ENCODE measurements at regions of chr9 and their contacts with region 1.

Region 1: GRCh38 chr9:36995927-36996705 is 38.0 kb downstream of the PAX5 start:
- DNase-seq: peak; percentile 77
- H3K4me3 Mint-ChIP-seq: no peak overlapping the region
- H3K27ac Mint-ChIP-seq: no peak overlapping the region
- H3K4me1 Mint-ChIP-seq: peaks cover 3% of the 10 kb centered on the region
- H3K27me3 Mint-ChIP-seq: peaks cover 30% of the 10 kb centered on the region

Region 2: DNA sequence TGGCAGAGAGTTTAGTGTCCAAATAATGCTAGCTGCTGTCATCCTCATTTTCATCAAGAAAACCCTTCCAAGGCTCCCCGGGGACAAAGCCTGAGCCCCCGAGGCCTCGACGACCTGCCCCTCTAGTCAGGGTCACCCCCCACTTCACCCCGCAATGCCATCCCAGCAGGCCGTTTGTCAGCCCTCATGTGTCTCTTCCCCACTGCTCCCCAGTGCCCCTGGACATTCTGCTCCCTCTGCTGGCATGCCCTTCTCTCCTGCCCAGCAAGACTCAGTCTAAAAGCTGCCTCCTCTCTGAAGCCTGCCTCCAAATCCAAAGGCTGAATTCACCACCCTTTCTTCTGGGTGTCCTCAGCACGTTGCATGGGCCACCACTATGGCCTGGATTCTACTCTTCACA is 21.4 kb before region 1 on chr9:
- CTCF ChIA-PET with region 1: no interaction called
- intact Hi-C with region 1: no loop called
- DNase-seq: peak; percentile 33
- H3K4me3 Mint-ChIP-seq: no peak overlapping the region
- H3K27ac Mint-ChIP-seq: no peak overlapping the region
- H3K4me1 Mint-ChIP-seq: peaks cover 3% of the 10 kb centered on the region
- H3K27me3 Mint-ChIP-seq: peaks cover 8% of the 10 kb centered on the region

Region 3: DNA sequence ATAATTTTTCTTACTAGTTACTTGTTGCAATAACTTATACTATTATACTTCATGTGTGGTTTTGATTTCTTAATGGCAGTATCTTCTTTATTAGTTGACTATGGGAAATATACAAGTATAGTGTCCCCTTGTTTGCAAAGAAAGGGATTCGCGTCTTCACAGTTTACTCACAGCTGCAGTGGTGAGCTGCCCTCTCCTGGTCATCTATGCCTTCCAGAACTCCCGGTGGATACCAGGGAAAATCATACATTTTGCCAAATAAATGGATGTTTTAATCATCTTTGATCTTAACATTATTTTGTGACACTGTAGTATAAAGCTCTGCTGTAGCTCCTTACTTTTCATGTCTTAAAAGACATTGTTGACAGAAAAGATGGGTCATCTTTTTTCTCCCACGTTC is 266.3 kb after region 1 on chr9:
- CTCF ChIA-PET with region 1: interaction called, 3 read pairs
- intact Hi-C with region 1: loop called (anchors 5 kb)
- DNase-seq: no peak
- H3K4me3 Mint-ChIP-seq: no peak overlapping the region
- H3K27ac Mint-ChIP-seq: no peak overlapping the region
- H3K4me1 Mint-ChIP-seq: peaks cover 9% of the 10 kb centered on the region
- H3K27me3 Mint-ChIP-seq: no peaks in the 10 kb centered on the region

Region 4: DNA sequence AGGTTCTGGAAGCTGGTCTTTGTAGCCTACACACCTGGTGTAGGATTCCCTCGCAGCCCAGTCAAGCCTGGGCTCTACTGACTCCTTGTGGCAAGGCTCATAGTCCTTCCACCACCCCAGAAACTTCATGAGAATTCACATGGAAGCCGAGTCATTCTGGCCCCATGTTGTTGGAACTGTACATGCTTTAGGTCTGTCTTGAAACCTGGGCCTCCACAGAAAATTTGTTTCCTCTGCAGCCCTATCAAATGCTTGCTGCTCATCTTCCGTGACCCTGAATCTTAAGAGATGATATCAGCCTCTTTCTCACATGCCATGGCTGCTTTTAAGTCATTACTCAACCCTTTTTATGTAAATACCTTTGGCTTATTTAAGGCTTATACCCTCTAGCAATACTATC is 313.0 kb after region 1 on chr9:
- CTCF ChIA-PET with region 1: interaction called, 6 read pairs
- intact Hi-C with region 1: loop called (anchors 1 kb)
- DNase-seq: peak; percentile 51
- H3K4me3 Mint-ChIP-seq: no peak overlapping the region
- H3K27ac Mint-ChIP-seq: no peak overlapping the region
- H3K4me1 Mint-ChIP-seq: peaks cover 10% of the 10 kb centered on the region
- H3K27me3 Mint-ChIP-seq: no peaks in the 10 kb centered on the region

Region 5: DNA sequence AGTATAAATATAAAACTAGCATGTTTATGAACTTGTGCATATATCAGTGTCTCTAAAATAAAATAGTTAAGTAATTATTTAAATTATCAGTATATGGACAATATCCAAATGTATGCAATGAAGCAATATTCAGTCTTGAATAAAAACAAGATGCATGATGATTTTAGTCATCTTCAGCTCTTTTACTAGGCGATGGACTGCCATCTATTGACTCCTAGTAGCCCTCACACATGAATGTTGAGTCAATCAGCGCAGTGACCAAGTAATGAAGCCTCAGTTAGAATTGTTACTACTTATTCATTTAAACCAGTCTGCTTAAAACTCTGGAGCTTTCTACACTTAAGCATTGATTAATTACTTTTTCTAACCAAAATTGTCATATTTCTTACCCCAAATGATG is 333.5 kb after region 1 on chr9:
- CTCF ChIA-PET with region 1: interaction called, 17 read pairs
- intact Hi-C with region 1: loop called (anchors 1 kb)
- DNase-seq: peak; percentile 16
- H3K4me3 Mint-ChIP-seq: no peak overlapping the region
- H3K27ac Mint-ChIP-seq: no peak overlapping the region
- H3K4me1 Mint-ChIP-seq: peaks cover 7% of the 10 kb centered on the region
- H3K27me3 Mint-ChIP-seq: no peaks in the 10 kb centered on the region

Region 6: GRCh38 chr9:37364751-37365360 is 368.7 kb after region 1 on chr9:
- CTCF ChIA-PET with region 1: interaction called, 6 read pairs
- intact Hi-C with region 1: loop called (anchors 1 kb)
- DNase-seq: peak; percentile 55
- H3K4me3 Mint-ChIP-seq: no peak overlapping the region
- H3K27ac Mint-ChIP-seq: no peak overlapping the region
- H3K4me1 Mint-ChIP-seq: no peaks in the 10 kb centered on the region
- H3K27me3 Mint-ChIP-seq: no peaks in the 10 kb centered on the region

Region 7: DNA sequence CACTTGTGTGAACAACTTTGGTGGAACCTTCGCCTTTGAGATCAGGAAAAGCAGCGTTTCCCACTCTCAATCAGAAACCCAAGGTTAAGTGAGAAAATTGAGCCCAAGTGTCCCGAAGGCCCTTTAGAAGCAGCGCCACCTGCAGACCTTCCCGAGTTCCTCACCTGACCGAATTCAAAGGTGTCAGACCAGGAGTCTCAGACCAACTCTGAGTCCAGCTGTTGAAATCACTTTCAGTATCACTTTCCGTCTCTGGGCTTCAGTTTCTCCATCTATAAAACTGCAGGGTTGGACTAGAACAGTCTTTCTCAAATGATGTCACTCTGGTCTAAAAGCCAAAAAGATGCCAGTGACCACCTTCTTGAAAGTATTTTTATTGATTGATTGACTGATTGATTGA is 394.6 kb after region 1 on chr9:
- CTCF ChIA-PET with region 1: interaction called, 7 read pairs
- intact Hi-C with region 1: loop called (anchors 1 kb)
- DNase-seq: peak; percentile 67
- H3K4me3 Mint-ChIP-seq: no peak overlapping the region
- H3K27ac Mint-ChIP-seq: no peak overlapping the region
- H3K4me1 Mint-ChIP-seq: no peaks in the 10 kb centered on the region
- H3K27me3 Mint-ChIP-seq: no peaks in the 10 kb centered on the region

Region 8: DNA sequence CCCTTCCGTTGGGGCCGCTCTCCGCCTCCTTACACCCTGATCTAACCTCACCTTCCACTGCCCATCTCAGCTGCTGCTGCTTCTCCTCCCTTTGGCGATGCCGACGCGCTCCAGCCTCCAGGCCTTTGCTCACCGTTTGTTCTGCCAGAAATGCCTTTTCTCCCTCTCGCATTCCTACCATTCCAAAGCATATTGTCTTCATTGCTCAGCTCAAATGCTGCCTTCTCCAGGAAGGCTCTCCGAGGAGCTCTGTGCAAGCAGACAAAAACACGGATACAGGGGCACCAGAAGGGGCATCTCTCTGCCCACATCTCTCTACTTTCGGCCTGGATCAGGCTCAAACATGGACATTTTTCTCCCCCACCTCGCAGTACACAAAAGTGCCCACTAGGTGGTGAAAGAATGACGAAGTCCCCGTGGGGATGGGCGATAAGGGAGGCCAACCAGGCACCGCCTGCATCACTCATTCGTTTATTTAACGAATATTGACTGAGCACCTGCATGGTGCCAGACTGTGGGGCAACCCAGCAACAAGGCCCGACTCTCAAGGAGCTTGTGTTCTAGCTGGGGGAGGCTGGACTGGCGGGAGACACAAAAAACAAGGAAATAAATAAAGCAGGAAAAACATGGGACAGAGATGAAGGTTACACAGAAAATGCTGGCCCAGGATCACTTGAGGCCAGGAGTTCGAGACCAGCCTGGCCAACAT is 419.0 kb after region 1 on chr9:
- CTCF ChIA-PET with region 1: interaction called, 9 read pairs
- intact Hi-C with region 1: loop called (anchors 5 kb)
- DNase-seq: peak; percentile 90
- H3K4me3 Mint-ChIP-seq: peak overlapping the region; percentile 34
- H3K27ac Mint-ChIP-seq: no peak overlapping the region
- H3K4me1 Mint-ChIP-seq: peaks cover 15% of the 10 kb centered on the region
- H3K27me3 Mint-ChIP-seq: peaks cover 5% of the 10 kb centered on the region